ENCODE measurements at regions of chr14 and their contacts with region 1.

Region 1: GRCh38 chr14:101823511-101824120 is 62.1 kb downstream of the PPP2R5C start:
- DNase-seq: peak; percentile 50 to 91 (median 66)
- ATAC-seq: peak; percentile 61
- H3K4me3 ChIP-seq: peak overlapping the region; percentile 76
- H3K4me3 Mint-ChIP-seq: peak overlapping the region; percentile 90
- H3K27ac ChIP-seq: peak overlapping the region; percentile 98 to 99
- H3K27ac Mint-ChIP-seq: peak overlapping the region; percentile 98
- H3K4me1 ChIP-seq: peaks cover 79% of the 10 kb centered on the region
- H3K4me1 Mint-ChIP-seq: peaks cover 89% of the 10 kb centered on the region
- H3K27me3 ChIP-seq: no peaks in the 10 kb centered on the region
- H3K27me3 Mint-ChIP-seq: no peaks in the 10 kb centered on the region
- CTCF ChIP-seq: no peak

Region 2: DNA sequence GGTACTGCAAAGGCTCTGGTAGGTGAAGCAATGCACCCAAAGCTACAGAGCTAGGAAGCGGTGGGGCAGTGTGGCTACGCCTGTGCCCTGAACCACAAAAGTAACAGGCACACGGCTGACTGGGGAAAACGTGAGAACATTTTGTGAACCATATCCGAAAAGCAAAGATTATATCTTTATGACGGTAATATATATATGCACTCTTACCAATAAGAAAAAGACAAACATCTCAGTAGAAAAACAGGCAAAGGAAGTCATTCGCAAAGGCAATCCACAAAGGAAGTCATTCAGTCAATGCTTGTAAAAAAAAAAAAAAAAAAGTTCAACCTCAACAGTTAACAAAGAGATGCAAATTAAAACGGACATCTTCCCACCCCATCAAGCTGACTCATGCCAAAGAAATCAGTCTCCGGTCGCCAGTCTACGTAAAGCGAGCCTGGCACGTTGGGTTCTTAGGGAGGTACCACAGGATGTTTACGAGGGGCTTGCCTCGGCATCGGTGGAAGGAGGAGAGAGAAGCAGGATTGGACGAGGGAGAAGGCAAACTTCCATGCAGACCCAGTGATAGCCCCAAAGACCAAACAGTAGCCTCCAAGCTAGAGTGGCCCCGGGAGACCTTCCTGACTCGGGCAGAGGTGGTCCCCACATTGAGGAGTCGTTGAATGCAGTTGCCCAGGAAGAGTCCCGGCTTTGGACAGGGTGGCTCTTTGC is 101.5 kb before region 1 on chr14:
- CTCF ChIA-PET with region 1: interaction called, 5 read pairs
- POLR2A ChIA-PET with region 1: interaction called, 34 read pairs
- intact Hi-C with region 1: loop called in 1 of 2 experiments (anchors 5 kb)
- DNase-seq: peak; percentile 65 to 95 (median 77)
- ATAC-seq: peak; percentile 77
- H3K4me3 ChIP-seq: peak overlapping the region; percentile 31
- H3K4me3 Mint-ChIP-seq: peak overlapping the region; percentile 70
- H3K27ac ChIP-seq: peak overlapping the region; percentile 84 to 87
- H3K27ac Mint-ChIP-seq: peak overlapping the region; percentile 95
- H3K4me1 ChIP-seq: peaks cover 61% of the 10 kb centered on the region
- H3K4me1 Mint-ChIP-seq: peaks cover 61% of the 10 kb centered on the region
- H3K27me3 ChIP-seq: no peaks in the 10 kb centered on the region
- H3K27me3 Mint-ChIP-seq: no peaks in the 10 kb centered on the region
- CTCF ChIP-seq: no peak

Region 3: DNA sequence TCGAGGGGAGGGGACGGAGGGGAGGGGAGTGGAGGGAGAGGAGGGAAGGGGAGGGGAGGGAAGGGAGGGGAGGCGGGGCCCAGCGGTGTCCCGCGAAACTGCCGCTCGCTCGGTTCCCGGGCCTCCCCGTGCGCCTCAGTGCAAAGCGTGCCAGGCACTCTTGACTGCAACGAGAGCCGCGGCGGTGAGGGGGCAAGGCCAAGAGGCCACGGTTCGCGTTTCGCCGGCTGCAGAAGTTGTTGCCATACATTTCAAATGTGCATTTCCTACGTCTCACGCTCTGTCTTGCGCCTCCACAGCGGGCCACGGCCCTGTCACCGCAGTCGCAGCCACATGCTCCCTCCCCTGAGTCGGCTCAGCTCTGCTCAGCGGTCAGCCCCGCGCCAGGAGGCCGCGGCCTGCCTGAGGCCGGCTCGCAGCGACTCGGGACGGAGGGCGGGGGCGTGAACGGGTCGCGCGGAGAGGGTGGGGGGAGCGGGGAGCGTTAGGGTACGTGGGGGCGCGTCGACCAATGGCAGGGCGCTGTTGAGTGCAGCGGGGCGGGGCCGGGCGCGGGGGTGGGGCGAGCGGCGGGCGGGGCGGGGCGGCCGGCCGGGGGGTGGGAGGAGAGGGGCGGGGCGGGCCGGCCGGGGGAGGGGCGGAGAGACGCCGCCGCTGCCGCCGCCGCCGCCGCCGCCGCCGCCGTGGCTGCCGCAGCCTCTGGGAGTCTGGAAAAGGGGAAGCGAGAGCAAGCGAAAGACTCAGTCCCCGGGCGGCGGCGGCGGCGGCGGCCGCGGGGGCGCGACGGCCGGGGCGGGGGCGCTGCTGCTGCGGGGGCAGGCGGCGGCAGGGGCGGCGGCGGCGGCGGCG is 62.4 kb before region 1 on chr14 and contains the start of gene PPP2R5C:
- CTCF ChIA-PET with region 1: interaction called, 4 read pairs
- POLR2A ChIA-PET with region 1: interaction called, 34 read pairs
- intact Hi-C with region 1: loop called in 1 of 2 experiments (anchors 5 kb)
- DNase-seq: peak; percentile 78 to 94 (median 86)
- ATAC-seq: peak; percentile 60
- H3K4me3 ChIP-seq: peak within 1 kb of the TSS; percentile 97
- H3K4me3 Mint-ChIP-seq: peak within 1 kb of the TSS; percentile 97
- H3K27ac ChIP-seq: peak within 1 kb of the TSS; percentile 79
- H3K27ac Mint-ChIP-seq: peak within 1 kb of the TSS; percentile 91
- H3K4me1 ChIP-seq: peaks cover 30% of the 10 kb centered on the region
- H3K4me1 Mint-ChIP-seq: peaks cover 43% of the 10 kb centered on the region
- H3K27me3 ChIP-seq: no peaks in the 10 kb centered on the region
- H3K27me3 Mint-ChIP-seq: no peaks in the 10 kb centered on the region
- CTCF ChIP-seq: no peak
- total RNA-seq, gene PPP2R5C: 463 to 487 TPM

Region 4: GRCh38 chr14:101791919-101792572 is 31.6 kb before region 1 on chr14:
- CTCF ChIA-PET with region 1: interaction called, 3 read pairs
- POLR2A ChIA-PET with region 1: interaction called, 73 read pairs
- intact Hi-C with region 1: loop called in 1 of 2 experiments (anchors 2 kb)
- DNase-seq: peak in 3 of 14 experiments; percentile 56 to 72 (median 64)
- ATAC-seq: peak; percentile 84
- H3K4me3 ChIP-seq: peak overlapping the region; percentile 40
- H3K4me3 Mint-ChIP-seq: peak overlapping the region; percentile 84
- H3K27ac ChIP-seq: peak overlapping the region in 1 of 2 donors; percentile 60
- H3K27ac Mint-ChIP-seq: peak overlapping the region; percentile 76
- H3K4me1 ChIP-seq: peaks cover 12% of the 10 kb centered on the region
- H3K4me1 Mint-ChIP-seq: peaks cover 36% of the 10 kb centered on the region
- H3K27me3 ChIP-seq: no peaks in the 10 kb centered on the region
- H3K27me3 Mint-ChIP-seq: no peaks in the 10 kb centered on the region
- CTCF ChIP-seq: no peak

Region 5: DNA sequence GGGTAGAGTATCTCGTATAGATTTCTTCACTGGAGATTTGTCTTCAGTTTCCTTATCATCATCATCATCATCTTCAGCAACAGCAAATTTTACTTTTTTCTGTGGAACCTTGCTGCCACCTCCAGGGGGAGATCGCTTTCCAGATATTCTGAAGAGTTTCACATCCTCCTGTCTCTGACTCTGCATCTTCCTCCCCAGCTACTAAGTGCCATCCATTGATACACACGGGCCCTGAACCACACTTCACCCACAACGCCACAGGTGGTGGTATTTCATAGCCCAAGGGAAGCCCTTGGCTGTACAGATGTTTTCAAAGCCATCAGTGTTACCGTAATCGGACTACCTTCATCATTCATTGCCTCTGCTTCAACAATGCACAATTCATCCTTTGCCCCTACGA is 20.0 kb after region 1 on chr14:
- CTCF ChIA-PET with region 1: interaction called, 12 read pairs
- POLR2A ChIA-PET with region 1: interaction called, 39 read pairs
- intact Hi-C with region 1: loop called (anchors 2 kb)
- DNase-seq: peak in 12 of 14 experiments; percentile 29 to 88 (median 50)
- ATAC-seq: peak; percentile 79
- H3K4me3 ChIP-seq: no peak overlapping the region
- H3K4me3 Mint-ChIP-seq: peak overlapping the region; percentile 26
- H3K27ac ChIP-seq: peak overlapping the region in 1 of 2 donors; percentile 48
- H3K27ac Mint-ChIP-seq: peak overlapping the region; percentile 78
- H3K4me1 ChIP-seq: peaks cover 88% of the 10 kb centered on the region
- H3K4me1 Mint-ChIP-seq: peaks cover 87% of the 10 kb centered on the region
- H3K27me3 ChIP-seq: no peaks in the 10 kb centered on the region
- H3K27me3 Mint-ChIP-seq: no peaks in the 10 kb centered on the region
- CTCF ChIP-seq: peak; percentile 69

Region 6: GRCh38 chr14:101876555-101876938 is 52.9 kb after region 1 on chr14:
- CTCF ChIA-PET with region 1: no interaction called
- POLR2A ChIA-PET with region 1: interaction called, 12 read pairs
- intact Hi-C with region 1: loop called in 1 of 2 experiments (anchors 1 kb)
- DNase-seq: peak; percentile 34 to 92 (median 64)
- ATAC-seq: peak; percentile 93
- H3K4me3 ChIP-seq: peak overlapping the region; percentile 27
- H3K4me3 Mint-ChIP-seq: peak overlapping the region; percentile 61
- H3K27ac ChIP-seq: peak overlapping the region; percentile 56 to 64
- H3K27ac Mint-ChIP-seq: peak overlapping the region; percentile 79
- H3K4me1 ChIP-seq: peaks cover 60% of the 10 kb centered on the region
- H3K4me1 Mint-ChIP-seq: peaks cover 78% of the 10 kb centered on the region
- H3K27me3 ChIP-seq: no peaks in the 10 kb centered on the region
- H3K27me3 Mint-ChIP-seq: no peaks in the 10 kb centered on the region
- CTCF ChIP-seq: no peak

Measured in CD4-positive, alpha-beta T cell (primary cell).